ENCODE measurements at regions of chr9 and their contacts with region 1.

Region 1: DNA sequence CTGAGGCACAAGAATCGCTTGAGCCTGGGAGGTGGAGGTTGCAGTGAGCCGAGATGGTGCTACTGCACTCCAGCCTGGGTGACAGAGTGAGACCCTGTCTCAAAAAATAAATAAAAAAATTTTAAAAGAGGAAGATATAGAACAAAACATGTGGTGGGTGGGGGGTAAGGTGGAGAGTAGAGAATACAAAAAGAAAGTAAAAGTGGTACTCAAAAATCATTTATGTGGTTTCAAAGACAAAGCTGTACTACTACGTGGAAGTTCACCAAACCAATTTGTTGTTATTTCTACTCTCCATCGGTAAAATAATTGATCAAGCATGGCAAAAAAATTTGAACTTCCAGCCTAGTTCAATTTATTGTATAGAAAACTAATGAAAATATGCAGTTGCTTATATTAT is 8.0 kb upstream of the OR13C3 start:
- DNase-seq: no peak
- ATAC-seq: no peak
- H3K4me3 ChIP-seq: no peak overlapping the region
- H3K27ac ChIP-seq: no peak overlapping the region
- H3K4me1 ChIP-seq: no peaks in the 10 kb centered on the region
- H3K27me3 ChIP-seq: no peaks in the 10 kb centered on the region
- CTCF ChIP-seq: no peak
- EP300 ChIP-seq: no peak
- POLR2A ChIP-seq: no peak
- RAD21 ChIP-seq: no peak

Region 2: DNA sequence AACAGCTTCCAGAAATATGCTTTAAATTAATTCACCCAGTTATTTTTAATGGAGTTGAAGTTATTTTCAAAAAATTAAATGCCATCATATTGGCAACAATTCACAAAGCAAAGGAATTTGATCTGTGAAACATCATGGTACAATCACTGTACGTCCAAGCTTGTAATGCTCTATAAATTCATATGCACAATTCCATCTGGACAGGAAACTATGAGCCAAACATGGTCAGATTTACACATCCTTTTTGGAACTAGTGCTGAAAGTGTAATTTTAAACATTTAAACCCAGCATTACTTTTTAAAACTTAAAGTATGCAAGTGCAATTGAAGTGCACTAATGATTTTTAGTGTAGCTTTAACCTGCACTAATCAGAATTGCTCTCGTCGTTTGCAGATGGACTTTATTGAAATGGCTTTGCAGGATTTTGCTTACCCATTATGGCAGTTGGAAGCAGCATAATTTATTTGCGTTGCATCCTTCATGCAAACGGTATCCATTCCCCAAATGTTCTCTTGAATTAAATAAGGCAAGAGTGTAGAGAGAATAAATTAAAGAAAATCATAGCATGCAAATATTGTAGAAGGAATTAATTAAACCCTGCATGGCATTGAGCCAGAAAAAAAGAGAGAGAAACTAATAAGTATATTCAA is 61.6 kb before region 1 on chr9:
- CTCF ChIA-PET with region 1: no interaction called
- POLR2A ChIA-PET with region 1: no interaction called
- in situ Hi-C with region 1: no loop called
- intact Hi-C with region 1: loop called (anchors 10 kb)
- DNase-seq: no peak
- ATAC-seq: no peak
- H3K4me3 ChIP-seq: no peak overlapping the region
- H3K27ac ChIP-seq: no peak overlapping the region
- H3K4me1 ChIP-seq: no peaks in the 10 kb centered on the region
- H3K27me3 ChIP-seq: no peaks in the 10 kb centered on the region
- CTCF ChIP-seq: no peak
- EP300 ChIP-seq: no peak
- POLR2A ChIP-seq: no peak
- RAD21 ChIP-seq: no peak

Region 3: DNA sequence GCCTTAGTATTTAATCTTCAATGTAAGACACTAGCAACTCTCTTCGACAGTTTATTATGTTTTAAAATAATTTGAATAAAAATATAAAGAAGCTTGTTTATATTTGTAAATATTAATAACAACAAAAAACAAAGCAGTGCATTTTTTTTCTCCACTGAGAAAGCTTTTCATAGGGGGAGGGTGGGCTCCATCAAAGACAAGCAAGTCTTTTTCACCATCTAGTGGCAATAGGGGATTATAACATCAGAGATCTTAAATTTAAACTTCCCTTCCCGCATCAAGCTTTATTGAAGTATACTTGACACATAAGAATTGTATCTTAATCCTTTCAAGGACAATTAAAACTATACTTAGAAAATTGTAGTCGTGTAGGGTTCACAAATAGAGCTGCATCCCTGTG is 49.8 kb before region 1 on chr9:
- CTCF ChIA-PET with region 1: no interaction called
- POLR2A ChIA-PET with region 1: no interaction called
- in situ Hi-C with region 1: no loop called
- intact Hi-C with region 1: no loop called
- DNase-seq: no peak
- ATAC-seq: no peak
- H3K4me3 ChIP-seq: no peak overlapping the region
- H3K27ac ChIP-seq: no peak overlapping the region
- H3K4me1 ChIP-seq: no peaks in the 10 kb centered on the region
- H3K27me3 ChIP-seq: no peaks in the 10 kb centered on the region
- CTCF ChIP-seq: no peak
- EP300 ChIP-seq: no peak
- POLR2A ChIP-seq: no peak
- RAD21 ChIP-seq: no peak

Region 4: GRCh38 chr9:104608336-104608735 is 63.7 kb after region 1 on chr9:
- CTCF ChIA-PET with region 1: no interaction called
- POLR2A ChIA-PET with region 1: no interaction called
- in situ Hi-C with region 1: no loop called
- intact Hi-C with region 1: loop called (anchors 10 kb)
- DNase-seq: no peak
- ATAC-seq: no peak
- H3K4me3 ChIP-seq: no peak overlapping the region
- H3K27ac ChIP-seq: no peak overlapping the region
- H3K4me1 ChIP-seq: no peaks in the 10 kb centered on the region
- H3K27me3 ChIP-seq: no peaks in the 10 kb centered on the region
- CTCF ChIP-seq: no peak
- EP300 ChIP-seq: no peak
- POLR2A ChIP-seq: no peak
- RAD21 ChIP-seq: no peak